Psoas muscle (tissue), 8 donors: ENCODE measurements at regions of chr16 and their contacts with region 1.

Region 1: DNA sequence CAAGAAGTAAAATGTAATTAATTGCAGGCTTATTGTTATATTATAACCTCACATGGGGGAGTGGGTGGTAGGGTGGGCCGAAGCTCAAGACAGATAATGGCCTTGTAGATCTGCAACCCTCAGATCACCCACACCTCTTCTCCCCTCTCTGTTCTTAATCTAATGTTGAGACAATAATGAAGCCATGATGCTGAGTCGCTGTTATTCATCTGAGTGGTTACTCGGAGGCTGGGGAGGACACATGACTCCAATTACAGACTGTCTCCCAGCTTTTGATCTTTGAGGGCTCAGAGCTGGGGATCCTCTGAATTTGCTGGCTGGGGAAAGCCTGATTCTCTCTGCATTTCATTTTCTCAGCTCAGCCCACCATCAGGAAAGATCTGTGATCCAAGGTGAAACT is 275.3 kb downstream of the SHISA9 start:
- DNase-seq: no peak
- ATAC-seq: no peak
- H3K4me3 ChIP-seq: no peak overlapping the region
- H3K27ac ChIP-seq: no peak overlapping the region
- H3K4me1 ChIP-seq: no peaks in the 10 kb centered on the region
- H3K27me3 ChIP-seq: no peaks in the 10 kb centered on the region
- CTCF ChIP-seq: no peak

Region 2: DNA sequence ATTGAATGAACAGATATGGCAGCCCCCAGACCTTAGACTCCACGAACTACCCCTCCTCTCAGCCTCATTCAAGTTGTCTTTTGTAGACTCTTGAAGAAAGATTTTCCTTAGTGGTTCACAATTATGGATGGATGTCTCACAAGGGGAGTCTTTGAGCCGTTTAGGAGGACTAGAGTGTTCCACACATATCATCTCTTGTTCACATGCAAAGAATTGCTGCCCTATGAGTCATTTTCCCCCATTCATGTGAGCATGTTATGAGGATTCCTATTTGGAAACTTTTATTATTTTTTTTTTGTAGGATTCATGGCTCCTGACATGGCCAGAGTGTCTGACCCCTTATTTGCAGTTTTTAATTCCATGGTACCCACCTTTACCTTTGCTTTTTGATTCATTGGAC is 38.2 kb before region 1 on chr16:
- intact Hi-C with region 1: no loop called
- DNase-seq: no peak
- ATAC-seq: no peak
- H3K4me3 ChIP-seq: no peak overlapping the region
- H3K27ac ChIP-seq: no peak overlapping the region
- H3K4me1 ChIP-seq: no peaks in the 10 kb centered on the region
- H3K27me3 ChIP-seq: peaks cover 0 to 2% (median 0%) of the 10 kb centered on the region in 3 donors
- CTCF ChIP-seq: no peak

Region 3: GRCh38 chr16:13231365-13231764 is 54.7 kb after region 1 on chr16:
- intact Hi-C with region 1: loop called in 1 of 2 experiments (anchors 10 kb)
- DNase-seq: no peak
- ATAC-seq: no peak
- H3K4me3 ChIP-seq: no peak overlapping the region
- H3K27ac ChIP-seq: no peak overlapping the region
- H3K4me1 ChIP-seq: no peaks in the 10 kb centered on the region
- H3K27me3 ChIP-seq: no peaks in the 10 kb centered on the region
- CTCF ChIP-seq: no peak